ENCODE measurements at regions of chr19 and their contacts with region 1.

Region 1: GRCh38 chr19:11987405-11988281 is 22.8 kb downstream of the ZNF763 start:
- DNase-seq: peak; percentile 73 to 90 (median 87)
- ATAC-seq: peak; percentile 95
- H3K4me3 ChIP-seq: peak overlapping the region; percentile 98
- H3K4me3 Mint-ChIP-seq: peak overlapping the region; percentile 84 to 99 (median 96)
- H3K27ac ChIP-seq: peak overlapping the region; percentile 88
- H3K27ac Mint-ChIP-seq: peak overlapping the region; percentile 70 to 97 (median 96)
- H3K4me1 ChIP-seq: peaks cover 0 to 8% of the 10 kb centered on the region in 2 donors
- H3K4me1 Mint-ChIP-seq: peaks cover 15 to 39% (median 28%) of the 10 kb centered on the region in 7 donors
- H3K27me3 ChIP-seq: no peaks in the 10 kb centered on the region
- H3K27me3 Mint-ChIP-seq: peaks cover 0 to 2% (median 0%) of the 10 kb centered on the region in 5 donors

Region 2: GRCh38 chr19:11881151-11881800 is 106.4 kb before region 1 on chr19:
- CTCF ChIA-PET with region 1: interaction called, 36 read pairs
- POLR2A ChIA-PET with region 1: interaction called, 4 read pairs
- intact Hi-C with region 1: loop called (anchors 1 kb)
- DNase-seq: peak; percentile 20 to 72 (median 59)
- ATAC-seq: peak; percentile 74
- H3K4me3 ChIP-seq: no peak overlapping the region
- H3K4me3 Mint-ChIP-seq: peak overlapping the region in 1 of 10 donors; percentile 31
- H3K27ac ChIP-seq: no peak overlapping the region
- H3K27ac Mint-ChIP-seq: peak overlapping the region in 3 of 9 donors; percentile 3 to 15 (median 12)
- H3K4me1 ChIP-seq: no peaks in the 10 kb centered on the region
- H3K4me1 Mint-ChIP-seq: peaks cover 0 to 7% (median 0%) of the 10 kb centered on the region in 7 donors
- H3K27me3 ChIP-seq: no peaks in the 10 kb centered on the region
- H3K27me3 Mint-ChIP-seq: peaks cover 0 to 3% (median 0%) of the 10 kb centered on the region in 5 donors

Region 3: DNA sequence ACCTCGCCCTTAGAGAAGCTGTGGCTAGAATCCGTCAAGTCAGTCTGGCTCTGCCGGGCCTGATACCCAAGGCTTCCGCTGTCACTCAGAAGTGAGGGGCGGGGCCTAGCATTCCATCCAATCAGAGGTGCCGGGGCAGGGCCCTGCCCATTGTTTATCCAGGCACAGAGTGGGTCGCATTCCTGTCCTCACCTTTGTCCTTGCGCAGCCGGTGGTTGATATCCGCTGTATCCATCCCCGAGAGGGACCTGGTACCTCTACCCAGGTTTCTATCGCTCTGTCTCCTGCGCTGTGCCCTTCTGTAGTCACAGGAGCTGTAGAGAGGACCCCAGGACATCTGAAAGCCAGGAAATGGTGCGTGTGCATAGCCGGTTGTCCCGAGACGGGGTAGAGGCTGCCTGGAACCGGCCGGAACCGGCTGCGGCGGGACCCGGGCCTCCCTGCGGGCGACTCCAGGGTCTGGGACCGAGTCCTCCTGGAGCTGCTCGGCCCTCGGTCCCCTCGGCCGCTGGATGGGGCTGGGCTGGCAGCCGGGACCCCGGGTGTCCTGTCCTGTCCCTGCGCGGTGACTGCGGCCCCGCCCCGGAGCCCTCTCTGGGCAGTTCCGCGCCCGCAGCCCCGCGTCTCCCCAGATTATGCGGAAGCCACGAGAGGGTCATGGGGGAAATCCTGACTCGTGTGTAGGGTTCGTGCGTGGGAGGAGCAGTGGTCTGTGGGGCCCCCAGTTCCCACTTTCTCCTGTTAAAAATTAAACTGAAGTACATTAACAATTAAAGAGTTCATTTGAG is 22.6 kb before region 1 on chr19 and contains the start of gene ZNF763:
- CTCF ChIA-PET with region 1: interaction called, 66 read pairs
- POLR2A ChIA-PET with region 1: interaction called, 33 read pairs
- intact Hi-C with region 1: loop called (anchors 1 kb)
- DNase-seq: peak; percentile 70 to 86 (median 83)
- ATAC-seq: peak; percentile 95
- H3K4me3 ChIP-seq: peak within 1 kb of the TSS; percentile 90
- H3K4me3 Mint-ChIP-seq: peak within 1 kb of the TSS; percentile 87 to 99 (median 94)
- H3K27ac ChIP-seq: peak within 1 kb of the TSS; percentile 88
- H3K27ac Mint-ChIP-seq: peak within 1 kb of the TSS; percentile 89 to 97 (median 94)
- H3K4me1 ChIP-seq: peaks cover 8 to 10% of the 10 kb centered on the region in 2 donors
- H3K4me1 Mint-ChIP-seq: peaks cover 21 to 34% (median 27%) of the 10 kb centered on the region in 7 donors
- H3K27me3 ChIP-seq: no peaks in the 10 kb centered on the region
- H3K27me3 Mint-ChIP-seq: no peaks in the 10 kb centered on the region
- total RNA-seq, gene ZNF763: 1.3 to 17.3 (median 4.4) TPM

Region 4: DNA sequence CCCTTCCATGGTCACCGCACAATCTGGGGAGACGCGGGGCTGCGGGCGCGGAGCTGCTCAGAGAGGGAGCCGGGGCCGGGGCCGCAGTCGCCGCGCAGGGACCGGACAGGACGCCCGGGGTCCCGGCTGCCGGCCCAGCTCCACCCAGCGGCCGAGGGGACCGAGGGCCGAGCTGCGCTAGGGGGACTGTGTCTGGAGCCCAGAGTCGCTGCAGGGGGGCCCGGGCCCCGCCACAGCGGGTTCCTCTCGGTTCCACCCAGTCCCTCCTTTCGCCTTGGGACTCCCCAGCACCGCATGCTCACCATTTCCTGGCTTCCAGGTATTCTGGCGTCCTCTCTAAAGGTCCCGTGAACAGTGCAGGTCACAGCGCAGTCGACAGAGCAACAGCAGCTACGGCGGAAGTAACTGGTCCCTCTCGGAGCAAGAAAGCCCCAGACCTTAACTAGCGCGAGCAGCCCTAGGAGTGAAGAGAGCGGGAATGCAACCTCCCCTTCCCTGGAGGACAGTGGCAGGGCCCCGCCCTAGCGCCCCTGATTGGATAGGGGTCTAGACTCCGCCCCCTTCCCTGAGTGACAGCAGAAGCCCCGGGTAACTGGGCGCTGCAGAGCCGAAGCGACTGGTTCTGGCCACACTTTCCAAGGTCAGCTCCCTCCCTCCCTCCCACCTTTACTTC is 65.0 kb after region 1 on chr19 and contains the start of gene ZNF878:
- CTCF ChIA-PET with region 1: no interaction called
- POLR2A ChIA-PET with region 1: interaction called, 3 read pairs
- intact Hi-C with region 1: loop called in 1 of 2 experiments (anchors 5 kb)
- DNase-seq: peak in 5 of 9 donors; percentile 24 to 40 (median 30)
- ATAC-seq: peak; percentile 87
- H3K4me3 ChIP-seq: peak within 1 kb of the TSS; percentile 61
- H3K4me3 Mint-ChIP-seq: peak within 1 kb of the TSS; percentile 81 to 92 (median 86)
- H3K27ac ChIP-seq: peak within 1 kb of the TSS; percentile 27
- H3K27ac Mint-ChIP-seq: peak within 1 kb of the TSS in 7 of 9 donors; percentile 9 to 61 (median 53)
- H3K4me1 ChIP-seq: peaks cover 5 to 10% of the 10 kb centered on the region in 2 donors
- H3K4me1 Mint-ChIP-seq: peaks cover 6 to 18% (median 13%) of the 10 kb centered on the region in 7 donors
- H3K27me3 ChIP-seq: no peaks in the 10 kb centered on the region
- H3K27me3 Mint-ChIP-seq: peaks cover 5 to 11% (median 9%) of the 10 kb centered on the region in 5 donors
- total RNA-seq, gene ZNF878: not detected

Region 5: DNA sequence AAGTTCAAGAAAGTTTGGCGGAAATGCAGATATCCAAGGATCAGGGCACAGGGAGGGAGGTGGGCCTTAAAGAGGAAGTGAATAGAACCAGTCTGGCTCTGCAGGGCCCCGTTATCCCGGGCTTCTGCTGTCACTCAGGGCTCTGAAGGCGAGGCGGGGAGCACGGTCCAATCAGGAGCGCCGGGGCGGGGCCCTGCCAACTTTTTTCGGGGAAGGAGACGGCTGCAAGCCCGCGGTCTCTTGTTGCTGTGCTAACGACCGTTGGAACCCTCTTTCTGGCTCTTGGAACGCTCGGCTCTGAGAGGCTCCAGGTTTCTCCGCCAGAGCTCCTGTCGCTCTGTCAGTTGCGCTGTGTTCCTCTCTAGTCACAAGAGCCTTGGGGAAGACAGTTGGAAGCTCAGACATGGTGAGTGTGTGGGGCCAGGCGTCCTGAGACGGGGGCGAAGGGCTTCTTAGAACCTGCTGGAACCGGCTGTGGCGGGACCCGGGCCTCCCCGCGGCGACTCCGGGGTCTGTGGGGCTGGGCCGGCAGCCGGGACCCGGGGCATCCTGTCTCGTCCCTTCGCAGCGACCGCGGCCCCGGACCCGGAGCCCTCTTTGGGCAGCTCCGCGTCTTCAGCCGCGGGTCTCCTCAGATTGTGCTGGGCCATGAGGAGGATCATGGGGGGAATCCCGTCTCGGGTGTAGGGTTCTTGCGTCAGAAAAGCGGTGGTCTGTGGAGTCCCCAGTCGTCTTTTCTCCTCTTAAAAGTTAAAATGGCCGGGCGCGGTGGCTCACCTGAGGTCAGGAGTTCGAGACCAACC is 104.6 kb after region 1 on chr19:
- CTCF ChIA-PET with region 1: no interaction called
- POLR2A ChIA-PET with region 1: no interaction called
- intact Hi-C with region 1: no loop called
- DNase-seq: peak in 8 of 9 donors; percentile 11 to 63 (median 22)
- ATAC-seq: peak; percentile 82
- H3K4me3 ChIP-seq: peak overlapping the region; percentile 45
- H3K4me3 Mint-ChIP-seq: peak overlapping the region; percentile 72 to 88 (median 82)
- H3K27ac ChIP-seq: peak overlapping the region; percentile 35
- H3K27ac Mint-ChIP-seq: peak overlapping the region in 6 of 9 donors; percentile 31 to 85 (median 64)
- H3K4me1 ChIP-seq: peaks cover 0 to 5% of the 10 kb centered on the region in 2 donors
- H3K4me1 Mint-ChIP-seq: peaks cover 5 to 19% (median 8%) of the 10 kb centered on the region in 7 donors
- H3K27me3 ChIP-seq: no peaks in the 10 kb centered on the region
- H3K27me3 Mint-ChIP-seq: peaks cover 0 to 17% (median 4%) of the 10 kb centered on the region in 5 donors

Measured in naive thymus-derived CD4-positive, alpha-beta T cell (primary cell).